IMR-90 (cell line): ENCODE measurements at regions of chr12 and their contacts with region 1.

Region 1: DNA sequence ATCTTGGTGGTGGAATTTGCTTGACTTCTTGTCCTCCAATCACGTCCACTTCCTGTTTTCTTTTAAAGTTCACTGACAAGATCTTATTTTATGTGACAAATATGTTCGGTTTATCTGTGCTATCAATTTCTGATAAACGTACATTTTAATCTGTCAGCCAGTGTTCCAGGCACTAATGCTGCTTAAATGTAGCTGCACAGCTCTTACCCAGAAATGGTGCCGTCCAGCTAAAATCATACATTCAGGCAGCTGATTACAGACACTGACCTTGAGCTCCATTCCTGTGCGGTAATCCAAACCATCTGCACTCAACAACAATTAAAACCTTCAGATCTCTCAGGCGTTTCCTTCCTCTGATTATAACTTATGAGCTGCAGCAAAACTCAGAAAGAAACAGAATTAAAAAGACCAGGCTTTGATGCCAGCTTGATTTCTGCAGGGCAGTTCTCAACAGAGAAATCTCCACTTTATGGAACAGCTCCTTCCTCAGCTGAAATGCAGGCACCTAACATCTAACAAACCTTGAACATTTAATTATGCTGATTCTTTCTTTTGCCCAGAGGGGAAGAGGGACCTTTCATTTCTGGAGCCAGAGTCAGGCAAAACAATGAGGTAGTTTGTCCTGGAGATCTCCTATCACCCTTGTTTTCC is 26.4 kb upstream of the RASSF3 start:
- DNase-seq: peak; percentile 28
- ATAC-seq: peak; percentile 59
- H3K4me3 ChIP-seq: no peak overlapping the region
- H3K27ac ChIP-seq: peak overlapping the region; percentile 32; the same call in 1 of the 2 replicates
- H3K4me1 ChIP-seq: peaks cover 18% of the 10 kb centered on the region
- H3K27me3 ChIP-seq: 0 out of 2 replicates have a peak, but pooled peaks cover 2% of the 10 kb centered on the region
- CTCF ChIP-seq: no peak
- POLR2A ChIP-seq: no peak
- RAD21 ChIP-seq: no peak

Region 2: DNA sequence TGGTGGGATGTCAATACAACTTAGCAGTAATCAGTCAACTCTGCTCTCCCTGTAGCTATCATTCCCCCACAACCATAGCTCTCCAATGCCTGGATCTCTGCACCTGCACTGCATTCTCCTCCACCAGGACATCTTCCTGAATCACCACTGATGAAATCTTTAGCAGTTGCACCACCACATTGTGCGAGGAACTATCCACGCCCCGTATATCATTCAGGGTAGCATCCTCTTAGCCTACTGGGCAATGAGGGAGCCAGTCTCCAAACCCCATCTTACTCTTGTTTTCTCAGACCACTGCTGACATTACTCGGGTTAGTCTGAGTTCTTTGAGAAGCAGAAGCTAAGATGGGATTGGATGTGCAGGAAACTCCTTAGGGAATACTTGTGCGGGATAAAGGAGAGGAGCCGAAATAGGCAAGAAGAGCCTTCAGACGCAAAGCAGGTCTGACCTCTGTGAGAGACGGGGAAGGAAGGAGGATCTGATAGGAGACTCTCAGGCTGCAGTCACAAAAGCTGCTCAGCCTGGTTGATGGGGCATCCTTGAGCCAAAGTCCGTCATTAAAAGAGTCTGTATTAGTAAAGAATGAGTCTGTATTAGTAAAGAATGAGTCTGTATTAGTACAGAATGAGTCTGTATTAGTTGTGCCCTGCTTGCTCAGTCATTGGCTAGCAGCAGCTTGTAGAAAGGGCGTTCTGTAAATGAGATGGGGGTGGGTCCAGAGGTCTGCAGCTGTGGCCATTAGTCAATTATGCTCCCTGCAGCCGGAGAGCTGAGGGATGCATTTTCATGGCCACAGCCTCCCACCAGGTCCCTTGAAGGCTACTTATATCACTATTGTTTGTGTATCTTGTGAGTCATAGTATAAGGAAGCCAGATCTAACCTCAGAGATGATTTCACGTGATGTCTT is 23.2 kb before region 1 on chr12:
- CTCF ChIA-PET with region 1: no interaction called
- POLR2A ChIA-PET with region 1: no interaction called
- dilution Hi-C with region 1: no loop called
- in situ Hi-C with region 1: no loop called
- intact Hi-C with region 1: loop called (anchors 2 kb)
- DNase-seq: peak; percentile 100
- ATAC-seq: peak; percentile 98
- H3K4me3 ChIP-seq: no peak overlapping the region
- H3K27ac ChIP-seq: peak overlapping the region; percentile 51; the same call in 1 of the 2 replicates
- H3K4me1 ChIP-seq: peaks cover 14% of the 10 kb centered on the region
- H3K27me3 ChIP-seq: no peaks in the 10 kb centered on the region
- CTCF ChIP-seq: no peak
- POLR2A ChIP-seq: no peak
- RAD21 ChIP-seq: no peak